ENCODE measurements at regions of chr1 and their contacts with region 1.

Region 1: GRCh38 chr1:51192213-51192843 is 43.7 kb upstream of the RNF11 start:
- DNase-seq: peak; percentile 16
- ATAC-seq: peak; percentile 42
- H3K4me3 Mint-ChIP-seq: no peak overlapping the region
- H3K27ac Mint-ChIP-seq: no peak overlapping the region
- H3K4me1 Mint-ChIP-seq: no peaks in the 10 kb centered on the region
- H3K27me3 Mint-ChIP-seq: peaks cover 7% of the 10 kb centered on the region
- CTCF ChIP-seq: peak; percentile 66

Region 2: GRCh38 chr1:50750021-50750619 is 442.2 kb before region 1 on chr1:
- CTCF ChIA-PET with region 1: interaction called, 3 read pairs
- POLR2A ChIA-PET with region 1: no interaction called
- intact Hi-C with region 1: loop called (anchors 1 kb)
- DNase-seq: no peak
- ATAC-seq: no peak
- H3K4me3 Mint-ChIP-seq: no peak overlapping the region
- H3K27ac Mint-ChIP-seq: no peak overlapping the region
- H3K4me1 Mint-ChIP-seq: no peaks in the 10 kb centered on the region
- H3K27me3 Mint-ChIP-seq: no peaks in the 10 kb centered on the region
- CTCF ChIP-seq: no peak

Region 3: DNA sequence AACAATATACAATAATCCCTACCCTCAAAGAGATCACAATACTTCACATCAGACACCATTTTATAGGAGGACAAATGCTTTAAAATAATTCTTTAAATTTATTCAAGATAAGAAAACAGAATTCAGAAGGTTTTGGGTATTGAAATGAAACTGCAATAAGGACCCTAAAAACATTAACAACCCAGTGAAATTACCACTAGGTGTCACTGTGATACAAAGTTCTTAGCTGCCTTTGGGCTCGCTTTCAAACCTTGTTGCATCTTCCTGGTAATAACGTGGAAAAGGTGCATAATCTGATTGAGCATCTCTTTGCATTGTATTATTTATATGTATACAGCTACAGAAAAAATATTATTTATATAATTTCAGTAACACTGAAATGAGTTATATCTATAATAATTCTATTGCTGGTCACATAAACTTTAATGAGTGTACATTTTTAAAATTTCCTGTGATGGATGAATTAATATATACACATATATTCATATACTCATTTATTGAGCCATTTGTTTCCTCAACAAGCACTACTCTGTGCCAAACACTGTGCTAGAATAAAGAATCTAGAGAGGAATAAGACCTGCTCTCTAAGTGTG is 417.5 kb before region 1 on chr1:
- CTCF ChIA-PET with region 1: interaction called, 124 read pairs
- POLR2A ChIA-PET with region 1: interaction called, 3 read pairs
- intact Hi-C with region 1: loop called (anchors 1 kb)
- DNase-seq: no peak
- ATAC-seq: no peak
- H3K4me3 Mint-ChIP-seq: no peak overlapping the region
- H3K27ac Mint-ChIP-seq: no peak overlapping the region
- H3K4me1 Mint-ChIP-seq: peaks cover 5% of the 10 kb centered on the region
- H3K27me3 Mint-ChIP-seq: no peaks in the 10 kb centered on the region
- CTCF ChIP-seq: peak; percentile 86

Region 4: GRCh38 chr1:50929376-50929958 is 262.9 kb before region 1 on chr1:
- CTCF ChIA-PET with region 1: interaction called, 42 read pairs
- POLR2A ChIA-PET with region 1: no interaction called
- intact Hi-C with region 1: loop called (anchors 1 kb)
- DNase-seq: no peak
- ATAC-seq: no peak
- H3K4me3 Mint-ChIP-seq: no peak overlapping the region
- H3K27ac Mint-ChIP-seq: no peak overlapping the region
- H3K4me1 Mint-ChIP-seq: peaks cover 34% of the 10 kb centered on the region
- H3K27me3 Mint-ChIP-seq: no peaks in the 10 kb centered on the region
- CTCF ChIP-seq: no peak

Region 5: DNA sequence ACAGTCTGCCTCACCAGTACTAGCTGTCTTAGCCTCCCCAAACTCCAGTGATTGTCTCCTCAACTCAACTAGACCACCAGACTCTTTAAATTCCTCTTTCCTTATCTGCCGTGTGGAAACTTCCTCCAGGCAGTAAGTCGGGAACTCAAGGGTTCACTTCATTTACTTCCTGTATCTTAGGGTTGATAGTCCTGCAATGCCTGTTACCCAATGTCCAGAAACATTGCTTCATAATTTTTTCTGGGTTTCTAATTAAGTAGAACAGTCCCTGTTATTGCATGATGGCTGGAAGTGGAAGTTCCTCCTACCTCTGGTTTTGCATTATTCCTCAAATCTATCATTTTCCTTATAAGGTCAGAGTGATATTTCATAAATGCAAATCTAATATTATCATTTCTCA is 17.1 kb before region 1 on chr1:
- CTCF ChIA-PET with region 1: interaction called, 10 read pairs
- POLR2A ChIA-PET with region 1: no interaction called
- intact Hi-C with region 1: no loop called
- DNase-seq: no peak
- ATAC-seq: no peak
- H3K4me3 Mint-ChIP-seq: no peak overlapping the region
- H3K27ac Mint-ChIP-seq: no peak overlapping the region
- H3K4me1 Mint-ChIP-seq: peaks cover 2% of the 10 kb centered on the region
- H3K27me3 Mint-ChIP-seq: peaks cover 38% of the 10 kb centered on the region
- CTCF ChIP-seq: no peak

Region 6: DNA sequence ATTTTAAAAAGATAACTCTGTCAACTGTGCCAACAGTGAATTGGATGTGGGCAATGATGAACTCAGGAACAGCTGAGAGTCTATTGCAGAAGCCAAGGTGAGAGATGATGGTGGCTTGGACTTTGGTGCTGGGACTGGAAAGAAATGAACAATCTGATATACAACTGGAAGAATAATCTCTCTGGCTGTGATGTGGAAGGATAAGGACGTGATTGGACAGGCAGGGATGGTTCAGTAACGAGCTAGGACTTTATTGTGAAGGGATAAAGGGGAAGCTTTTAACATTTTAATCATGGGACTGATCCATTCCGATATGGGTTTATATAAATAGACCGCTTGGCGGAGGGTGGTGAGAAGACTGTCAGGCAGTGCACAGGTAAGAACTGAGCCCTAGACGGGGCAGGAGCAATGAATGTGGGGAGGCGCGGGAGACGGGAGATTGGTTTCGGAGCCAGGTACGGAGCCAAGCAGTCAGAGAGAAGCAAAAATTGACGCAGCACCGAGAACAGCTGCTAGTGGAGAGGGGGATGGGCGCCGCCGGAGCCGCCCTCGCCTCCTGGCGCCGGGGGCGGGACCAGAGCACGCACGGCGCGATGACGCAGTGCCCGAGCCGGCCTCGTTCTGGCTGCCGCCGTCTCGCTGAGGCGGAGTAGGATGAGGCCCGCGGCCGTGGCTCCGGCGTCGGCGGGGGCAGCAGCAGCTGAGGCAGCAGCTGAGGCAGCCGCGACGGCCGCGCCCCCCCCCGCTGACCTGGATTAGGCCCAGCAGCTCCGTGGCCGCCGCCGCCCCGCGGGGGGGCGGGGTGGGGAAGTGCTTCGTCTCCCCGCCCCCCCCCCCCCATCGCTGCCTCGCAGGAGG is 43.6 kb after region 1 on chr1 and contains the start of gene RNF11:
- CTCF ChIA-PET with region 1: interaction called, 5 read pairs
- POLR2A ChIA-PET with region 1: no interaction called
- intact Hi-C with region 1: loop called (anchors 1 kb)
- DNase-seq: peak; percentile 94
- ATAC-seq: peak; percentile 74
- H3K4me3 Mint-ChIP-seq: peak within 1 kb of the TSS; percentile 92
- H3K27ac Mint-ChIP-seq: peak within 1 kb of the TSS; percentile 93
- H3K4me1 Mint-ChIP-seq: peaks cover 24% of the 10 kb centered on the region
- H3K27me3 Mint-ChIP-seq: peaks cover 4% of the 10 kb centered on the region
- CTCF ChIP-seq: no peak
- total RNA-seq, gene RNF11: 15.3 and 17.1 TPM in 2 replicates

Region 7: GRCh38 chr1:51296383-51297357 is 104.3 kb after region 1 on chr1:
- CTCF ChIA-PET with region 1: interaction called, 47 read pairs
- POLR2A ChIA-PET with region 1: no interaction called
- intact Hi-C with region 1: loop called (anchors 1 kb)
- DNase-seq: peak; percentile 71
- ATAC-seq: peak; percentile 65
- H3K4me3 Mint-ChIP-seq: peak overlapping the region; percentile 68
- H3K27ac Mint-ChIP-seq: no peak overlapping the region
- H3K4me1 Mint-ChIP-seq: peaks cover 8% of the 10 kb centered on the region
- H3K27me3 Mint-ChIP-seq: peaks cover 2% of the 10 kb centered on the region
- CTCF ChIP-seq: peak; percentile 74